ENCODE measurements at regions of chr11 and their contacts with region 1.

Region 1: DNA sequence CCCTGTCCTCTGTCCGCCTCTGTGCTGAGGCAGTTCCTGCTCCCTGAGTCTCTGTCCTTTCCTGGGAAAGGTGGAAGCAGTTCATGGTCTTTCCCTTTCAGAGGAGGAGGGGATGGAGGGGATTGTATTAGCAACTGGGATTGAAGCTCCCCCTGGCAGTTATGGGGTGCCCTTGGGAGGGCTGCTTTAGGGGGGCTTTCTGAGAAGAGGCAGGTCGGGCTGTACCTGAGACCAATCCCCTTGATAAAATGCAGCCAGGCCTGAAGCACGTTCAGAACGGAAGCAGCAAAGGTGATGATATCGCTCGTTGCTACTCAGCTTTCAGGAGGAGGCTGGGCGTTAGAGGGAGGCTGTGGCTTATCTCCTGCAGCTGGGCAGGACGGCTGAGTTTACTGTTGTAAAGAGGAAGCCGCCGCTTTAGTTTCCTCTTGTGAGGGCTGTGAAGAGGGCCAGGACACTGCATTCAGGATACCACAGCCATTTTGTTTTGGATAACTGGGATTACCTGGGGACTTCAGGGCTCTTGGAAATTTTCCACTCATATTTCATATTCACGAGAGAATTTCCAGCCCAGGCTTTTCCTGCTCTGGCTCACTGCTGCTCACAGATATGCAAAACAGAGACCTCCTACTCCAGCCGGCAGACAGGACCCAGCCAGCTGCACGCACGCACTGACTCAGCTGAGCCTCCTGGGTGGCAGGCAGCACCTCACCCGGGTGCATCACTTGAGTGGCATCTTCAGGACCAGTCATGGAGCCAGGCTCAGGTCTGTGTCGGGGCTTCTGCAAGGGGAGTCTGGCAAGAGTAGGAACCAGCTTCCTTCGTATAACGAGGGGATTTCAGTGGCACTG is 798 bp downstream of the AMPD3 start:
- H3K4me3 Mint-ChIP-seq: peak overlapping the region; percentile 89
- H3K27ac Mint-ChIP-seq: peak overlapping the region; percentile 89
- H3K4me1 Mint-ChIP-seq: peaks cover 81% of the 10 kb centered on the region
- H3K27me3 Mint-ChIP-seq: no peaks in the 10 kb centered on the region

Region 2: GRCh38 chr11:10413268-10413667 is 42.6 kb before region 1 on chr11:
- intact Hi-C with region 1: loop called (anchors 2 kb)
- H3K4me3 Mint-ChIP-seq: no peak overlapping the region
- H3K27ac Mint-ChIP-seq: peak overlapping the region; percentile 78
- H3K4me1 Mint-ChIP-seq: peaks cover 63% of the 10 kb centered on the region
- H3K27me3 Mint-ChIP-seq: peaks cover 2% of the 10 kb centered on the region

Region 3: GRCh38 chr11:10436224-10436623 is 19.6 kb before region 1 on chr11:
- intact Hi-C with region 1: loop called (anchors 2 kb)
- H3K4me3 Mint-ChIP-seq: no peak overlapping the region
- H3K27ac Mint-ChIP-seq: peak overlapping the region; percentile 88
- H3K4me1 Mint-ChIP-seq: peaks cover 24% of the 10 kb centered on the region
- H3K27me3 Mint-ChIP-seq: no peaks in the 10 kb centered on the region

Region 4: GRCh38 chr11:10502770-10503169 is 46.9 kb after region 1 on chr11:
- intact Hi-C with region 1: loop called (anchors 5 kb)
- H3K4me3 Mint-ChIP-seq: peak overlapping the region; percentile 32
- H3K27ac Mint-ChIP-seq: peak overlapping the region; percentile 82
- H3K4me1 Mint-ChIP-seq: peaks cover 49% of the 10 kb centered on the region
- H3K27me3 Mint-ChIP-seq: no peaks in the 10 kb centered on the region

Measured in dendritic cell treated with granulocyte-macrophage colony-stimulating factor and Interleukin-4, amounts not matched to agents 40 ng/mL and 50 ng/mL, for 4 days (primary cell).